ENCODE measurements at regions of chr17 and their contacts with region 1.

Region 1: GRCh38 chr17:5419356-5419958 is at the start of gene NUP88:
- DNase-seq: peak; percentile 95
- H3K4me3 Mint-ChIP-seq: peak within 1 kb of the TSS; percentile 100
- H3K27ac Mint-ChIP-seq: peak within 1 kb of the TSS; percentile 99
- H3K4me1 Mint-ChIP-seq: peaks cover 32% of the 10 kb centered on the region
- H3K27me3 Mint-ChIP-seq: no peaks in the 10 kb centered on the region
- total RNA-seq, gene NUP88: 165 and 170 TPM in 2 replicates

Region 2: DNA sequence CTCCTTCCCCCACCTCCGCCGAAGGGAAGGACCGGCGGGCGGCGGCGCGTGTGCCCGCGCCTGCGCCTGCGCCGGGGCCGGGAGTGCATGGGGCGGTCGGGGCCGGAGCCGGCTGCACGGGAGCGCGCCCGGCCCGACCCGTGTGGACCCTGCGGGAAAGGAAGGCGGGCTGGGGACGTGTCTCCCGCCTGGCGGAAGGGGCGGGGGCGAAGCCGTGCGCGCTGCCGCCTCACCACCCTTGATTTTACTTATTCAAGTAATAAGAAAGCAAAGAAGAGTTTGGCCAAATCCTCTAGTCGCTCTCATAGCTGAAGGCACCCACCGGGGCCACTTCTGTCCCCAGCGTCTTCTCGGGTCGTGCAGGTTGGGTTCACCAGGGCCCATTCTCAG is 470.5 kb before region 1 on chr17:
- intact Hi-C with region 1: loop called (anchors 5 kb)
- DNase-seq: peak; percentile 77
- H3K4me3 Mint-ChIP-seq: peak overlapping the region; percentile 97
- H3K27ac Mint-ChIP-seq: peak overlapping the region; percentile 100
- H3K4me1 Mint-ChIP-seq: peaks cover 49% of the 10 kb centered on the region
- H3K27me3 Mint-ChIP-seq: peaks cover 2% of the 10 kb centered on the region

Region 3: GRCh38 chr17:5191541-5192417 is 227.7 kb before region 1 on chr17 and contains the start of gene ZNF594:
- intact Hi-C with region 1: loop called (anchors 10 kb)
- DNase-seq: peak; percentile 95
- H3K4me3 Mint-ChIP-seq: peak within 1 kb of the TSS; percentile 93
- H3K27ac Mint-ChIP-seq: peak within 1 kb of the TSS; percentile 81
- H3K4me1 Mint-ChIP-seq: peaks cover 20% of the 10 kb centered on the region
- H3K27me3 Mint-ChIP-seq: peaks cover 2% of the 10 kb centered on the region
- total RNA-seq, gene ZNF594: 8.5 and 8.8 TPM in 2 replicates

Region 4: GRCh38 chr17:5249615-5250014 is 169.8 kb before region 1 on chr17:
- intact Hi-C with region 1: loop called (anchors 1 kb)
- DNase-seq: peak; percentile 43
- H3K4me3 Mint-ChIP-seq: no peak overlapping the region
- H3K27ac Mint-ChIP-seq: no peak overlapping the region
- H3K4me1 Mint-ChIP-seq: peaks cover 6% of the 10 kb centered on the region
- H3K27me3 Mint-ChIP-seq: peaks cover 7% of the 10 kb centered on the region

Region 5: GRCh38 chr17:5281814-5282653 is 137.4 kb before region 1 on chr17 and contains the start of gene RABEP1:
- intact Hi-C with region 1: loop called (anchors 1 kb)
- DNase-seq: peak; percentile 92
- H3K4me3 Mint-ChIP-seq: peak within 1 kb of the TSS; percentile 90
- H3K27ac Mint-ChIP-seq: peak within 1 kb of the TSS; percentile 91
- H3K4me1 Mint-ChIP-seq: peaks cover 28% of the 10 kb centered on the region
- H3K27me3 Mint-ChIP-seq: peaks cover 3% of the 10 kb centered on the region
- total RNA-seq, gene RABEP1: 50.2 and 51.4 TPM in 2 replicates

Region 6: GRCh38 chr17:5438716-5439445 is 19.4 kb after region 1 on chr17 and contains the start of gene C1QBP:
- intact Hi-C with region 1: loop called (anchors 1 kb)
- DNase-seq: peak; percentile 89
- H3K4me3 Mint-ChIP-seq: peak within 1 kb of the TSS; percentile 94
- H3K27ac Mint-ChIP-seq: peak within 1 kb of the TSS; percentile 87
- H3K4me1 Mint-ChIP-seq: peaks cover 40% of the 10 kb centered on the region
- H3K27me3 Mint-ChIP-seq: no peaks in the 10 kb centered on the region
- total RNA-seq, gene C1QBP: 410 and 413 TPM in 2 replicates

Region 7: DNA sequence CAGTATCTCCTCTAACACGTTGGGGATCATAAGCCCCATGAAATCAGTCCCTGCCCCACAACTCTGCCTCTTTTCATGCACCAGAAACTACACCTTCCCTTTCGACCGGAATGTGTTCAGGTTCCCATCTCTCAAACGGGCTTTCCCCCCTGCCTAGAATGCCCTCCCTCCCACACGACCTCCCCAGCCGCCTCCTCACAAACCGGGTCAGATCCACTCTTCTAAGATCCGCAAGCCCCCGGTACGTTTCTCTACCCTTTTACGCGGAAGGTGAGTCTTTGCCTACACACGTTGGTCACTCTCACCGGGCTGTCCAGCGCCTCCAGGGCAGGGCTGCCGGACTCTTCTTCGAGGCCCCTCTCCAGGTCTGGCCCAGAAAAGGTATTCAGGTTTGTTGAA is 48.6 kb after region 1 on chr17:
- intact Hi-C with region 1: loop called (anchors 1 kb)
- DNase-seq: no peak
- H3K4me3 Mint-ChIP-seq: peak overlapping the region; percentile 92
- H3K27ac Mint-ChIP-seq: peak overlapping the region; percentile 46
- H3K4me1 Mint-ChIP-seq: peaks cover 50% of the 10 kb centered on the region
- H3K27me3 Mint-ChIP-seq: no peaks in the 10 kb centered on the region

Measured in activated T-helper 1 cell treated with anti-CD3 and anti-CD28 coated beads, Interleukin-12 subunit alpha, Interleukin-12 subunit beta, Interleukin-2, Interleukin-4 antibody, amounts not matched to agents 30 ng/mL and 10 ng/mL and 1 ng/mL, durations not matched to agents 14 hours and 24 hours and 36 hours (primary cell).